ENCODE measurements at regions of chr10 and their contacts with region 1.

Region 1: DNA sequence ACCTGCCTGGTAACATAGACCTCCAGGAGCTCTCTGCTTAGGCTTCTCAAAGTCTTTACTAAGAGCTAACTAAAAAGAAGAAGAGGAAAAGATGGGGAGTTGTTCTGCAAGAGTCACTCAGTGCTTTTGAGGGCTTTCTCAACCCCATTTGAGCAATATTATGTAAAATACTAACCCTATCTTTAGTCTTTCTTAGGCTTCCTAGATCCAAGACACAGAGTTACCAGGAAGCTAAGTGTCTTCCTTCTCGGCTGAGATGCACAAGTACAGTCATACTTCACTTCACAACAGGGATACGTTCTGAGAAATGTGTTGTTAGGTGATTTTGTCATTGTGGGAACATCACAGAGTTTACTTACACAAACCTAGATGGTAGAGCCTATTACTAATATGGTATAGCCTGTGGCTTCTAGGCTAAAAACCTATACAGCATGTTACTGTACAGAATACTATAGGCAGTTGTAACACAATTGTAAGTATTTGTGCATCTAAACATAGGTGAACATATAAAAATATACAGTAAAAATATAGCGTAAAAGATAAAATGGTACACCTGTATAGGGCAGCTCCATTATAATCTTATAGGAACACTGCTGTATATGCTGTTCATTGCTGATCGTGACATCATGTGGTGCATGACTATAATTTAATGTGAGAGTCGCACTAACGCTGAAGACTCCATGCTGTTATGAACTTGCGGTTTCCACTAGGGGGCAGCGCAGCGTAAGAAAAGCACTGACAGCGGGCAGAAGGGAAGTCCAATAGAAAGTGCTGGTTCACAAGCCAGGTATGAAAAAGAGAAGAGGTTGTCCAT is 16.3 kb downstream of the ANKRD22 start:
- DNase-seq: peak; percentile 94
- ATAC-seq: peak; percentile 92
- H3K4me3 Mint-ChIP-seq: no peak overlapping the region
- H3K27ac Mint-ChIP-seq: no peak overlapping the region
- H3K4me1 Mint-ChIP-seq: peaks cover 40% of the 10 kb centered on the region
- H3K27me3 Mint-ChIP-seq: no peaks in the 10 kb centered on the region

Region 2: DNA sequence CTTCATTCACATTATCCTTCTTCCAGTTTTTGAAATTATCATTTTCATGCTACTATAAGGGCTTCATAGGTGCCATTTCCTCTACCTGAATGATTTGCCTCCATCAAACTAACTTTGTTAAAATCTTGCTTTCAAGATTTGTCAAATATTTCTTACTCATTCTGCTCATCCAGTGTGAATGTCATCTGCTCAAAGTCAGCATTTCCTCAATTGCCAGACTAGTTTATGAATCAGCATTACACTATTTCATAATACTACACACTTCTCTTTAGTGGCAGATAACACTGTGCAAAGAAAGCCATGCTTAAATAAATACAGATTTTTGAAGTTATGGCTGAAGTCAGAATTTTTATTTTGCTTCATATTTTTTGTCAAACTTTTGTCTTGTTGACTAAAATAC is 192.3 kb before region 1 on chr10:
- CTCF ChIA-PET with region 1: no interaction called
- POLR2A ChIA-PET with region 1: no interaction called
- DNase-seq: no peak
- ATAC-seq: no peak
- H3K4me3 Mint-ChIP-seq: no peak overlapping the region
- H3K27ac Mint-ChIP-seq: no peak overlapping the region
- H3K4me1 Mint-ChIP-seq: no peaks in the 10 kb centered on the region
- H3K27me3 Mint-ChIP-seq: peaks cover 14% of the 10 kb centered on the region

Region 3: DNA sequence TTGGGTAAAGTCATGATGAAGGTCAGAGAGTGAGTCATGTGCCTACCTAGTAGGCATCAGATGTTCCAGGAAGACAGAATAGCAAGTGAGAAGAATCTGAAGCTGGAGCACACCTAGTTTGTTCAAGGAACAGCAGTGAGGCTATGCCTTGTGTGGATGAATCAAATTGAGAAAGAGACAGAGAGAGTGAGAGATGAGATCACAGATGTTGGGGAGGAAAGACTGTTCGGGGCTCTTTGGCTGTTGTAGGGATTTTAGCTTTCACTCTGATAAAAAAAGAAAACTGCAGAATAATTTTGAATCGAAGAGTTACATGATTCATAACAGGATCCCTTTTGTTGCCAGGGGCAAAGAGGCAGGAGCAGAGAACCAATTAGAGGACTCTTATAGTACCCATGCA is 164.8 kb before region 1 on chr10:
- CTCF ChIA-PET with region 1: no interaction called
- POLR2A ChIA-PET with region 1: no interaction called
- DNase-seq: no peak
- ATAC-seq: no peak
- H3K4me3 Mint-ChIP-seq: no peak overlapping the region
- H3K27ac Mint-ChIP-seq: no peak overlapping the region
- H3K4me1 Mint-ChIP-seq: peaks cover 6% of the 10 kb centered on the region
- H3K27me3 Mint-ChIP-seq: peaks cover 3% of the 10 kb centered on the region

Region 4: GRCh38 chr10:88728107-88728763 is 107.1 kb before region 1 on chr10:
- CTCF ChIA-PET with region 1: interaction called, 27 read pairs
- POLR2A ChIA-PET with region 1: no interaction called
- DNase-seq: peak; percentile 52
- ATAC-seq: no peak
- H3K4me3 Mint-ChIP-seq: no peak overlapping the region
- H3K27ac Mint-ChIP-seq: no peak overlapping the region
- H3K4me1 Mint-ChIP-seq: peaks cover 5% of the 10 kb centered on the region
- H3K27me3 Mint-ChIP-seq: peaks cover 7% of the 10 kb centered on the region

Region 5: GRCh38 chr10:88820748-88821389 is 14.4 kb before region 1 on chr10:
- CTCF ChIA-PET with region 1: interaction called, 59 read pairs
- POLR2A ChIA-PET with region 1: interaction called, 3 read pairs
- DNase-seq: no peak
- ATAC-seq: no peak
- H3K4me3 Mint-ChIP-seq: no peak overlapping the region
- H3K27ac Mint-ChIP-seq: no peak overlapping the region
- H3K4me1 Mint-ChIP-seq: peaks cover 23% of the 10 kb centered on the region
- H3K27me3 Mint-ChIP-seq: no peaks in the 10 kb centered on the region

Region 6: GRCh38 chr10:88880282-88881076 is 45.2 kb after region 1 on chr10:
- CTCF ChIA-PET with region 1: interaction called, 57 read pairs
- POLR2A ChIA-PET with region 1: interaction called, 16 read pairs
- DNase-seq: peak; percentile 87
- ATAC-seq: peak; percentile 81
- H3K4me3 Mint-ChIP-seq: peak overlapping the region; percentile 98
- H3K27ac Mint-ChIP-seq: peak overlapping the region; percentile 98
- H3K4me1 Mint-ChIP-seq: peaks cover 70% of the 10 kb centered on the region
- H3K27me3 Mint-ChIP-seq: no peaks in the 10 kb centered on the region

Region 7: DNA sequence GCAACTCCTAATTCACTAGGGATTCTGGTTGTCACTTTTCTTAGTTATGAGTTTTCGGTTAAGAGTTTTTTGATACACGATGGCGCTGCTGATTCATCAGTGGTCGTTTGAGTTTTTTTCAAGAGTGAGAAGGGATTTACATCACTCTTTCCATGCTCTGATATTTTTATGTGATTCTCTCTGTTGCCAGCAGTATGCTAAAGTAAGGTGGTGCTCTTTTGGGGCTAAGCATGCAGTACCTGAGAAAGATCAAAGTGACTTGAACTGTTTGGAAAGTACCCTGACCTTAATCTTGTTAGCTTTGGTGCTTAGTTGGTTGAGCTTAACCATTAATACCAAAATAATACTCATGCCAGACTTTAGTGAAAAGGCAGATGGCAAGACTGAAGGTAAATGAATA is 72.9 kb after region 1 on chr10:
- CTCF ChIA-PET with region 1: interaction called, 18 read pairs
- POLR2A ChIA-PET with region 1: no interaction called
- DNase-seq: no peak
- ATAC-seq: no peak
- H3K4me3 Mint-ChIP-seq: no peak overlapping the region
- H3K27ac Mint-ChIP-seq: no peak overlapping the region
- H3K4me1 Mint-ChIP-seq: peaks cover 3% of the 10 kb centered on the region
- H3K27me3 Mint-ChIP-seq: no peaks in the 10 kb centered on the region